ENCODE measurements at regions of chr1 and their contacts with region 1.

Region 1: DNA sequence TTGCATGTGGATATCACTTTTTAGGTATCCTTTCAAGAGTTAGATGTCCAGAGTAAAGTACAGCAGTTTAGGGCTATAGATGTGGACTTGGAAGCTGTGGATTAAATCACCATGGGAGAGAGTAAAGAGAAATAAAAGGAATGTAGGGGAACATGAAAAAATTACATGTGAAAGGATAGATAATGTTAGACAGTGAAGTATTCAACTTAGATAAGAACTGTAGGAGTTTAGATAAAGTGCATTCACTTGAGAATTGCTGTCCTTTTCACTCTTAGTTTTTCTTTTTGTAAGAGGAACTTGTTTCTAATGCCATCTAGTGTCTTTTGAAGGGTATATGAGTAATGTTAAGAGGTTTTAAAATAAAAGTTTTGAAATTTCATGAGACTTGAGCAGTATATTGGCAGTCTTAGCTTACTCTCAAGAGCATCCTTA is 40.1 kb downstream of the MAST2 start:
- DNase-seq: no peak
- H3K4me3 ChIP-seq: no peak overlapping the region
- H3K27ac ChIP-seq: no peak overlapping the region
- H3K4me1 ChIP-seq: peaks cover 0 to 6% of the 10 kb centered on the region in 2 donors
- H3K27me3 ChIP-seq: no peaks in the 10 kb centered on the region
- CTCF ChIP-seq: peak in 5 of 6 experiments; percentile 17 to 47 (median 44)
- POLR2A ChIP-seq: no peak

Region 2: DNA sequence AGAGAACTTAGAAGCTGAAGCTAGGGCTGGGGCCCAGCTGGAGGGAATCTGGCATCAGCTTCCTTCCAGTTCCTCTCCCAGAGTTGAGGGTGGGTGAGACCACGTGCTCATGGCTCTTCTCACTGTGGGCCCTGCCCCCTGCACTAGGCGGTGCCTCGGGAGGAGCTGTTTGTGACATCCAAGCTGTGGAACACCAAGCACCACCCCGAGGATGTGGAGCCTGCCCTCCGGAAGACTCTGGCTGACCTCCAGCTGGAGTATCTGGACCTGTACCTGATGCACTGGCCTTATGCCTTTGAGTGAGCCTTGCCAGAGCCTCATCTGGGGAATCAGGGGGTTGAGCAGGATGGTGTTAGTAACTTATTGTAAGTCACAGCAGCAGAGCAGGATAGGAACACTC is 276.8 kb before region 1 on chr1:
- intact Hi-C with region 1: no loop called
- DNase-seq: peak in 6 of 7 donors; percentile 43 to 84 (median 46)
- H3K4me3 ChIP-seq: no peak overlapping the region
- H3K27ac ChIP-seq: no peak overlapping the region
- H3K4me1 ChIP-seq: peaks cover 0 to 8% of the 10 kb centered on the region in 2 donors
- H3K27me3 ChIP-seq: no peaks in the 10 kb centered on the region
- CTCF ChIP-seq: no peak
- POLR2A ChIP-seq: no peak

Region 3: DNA sequence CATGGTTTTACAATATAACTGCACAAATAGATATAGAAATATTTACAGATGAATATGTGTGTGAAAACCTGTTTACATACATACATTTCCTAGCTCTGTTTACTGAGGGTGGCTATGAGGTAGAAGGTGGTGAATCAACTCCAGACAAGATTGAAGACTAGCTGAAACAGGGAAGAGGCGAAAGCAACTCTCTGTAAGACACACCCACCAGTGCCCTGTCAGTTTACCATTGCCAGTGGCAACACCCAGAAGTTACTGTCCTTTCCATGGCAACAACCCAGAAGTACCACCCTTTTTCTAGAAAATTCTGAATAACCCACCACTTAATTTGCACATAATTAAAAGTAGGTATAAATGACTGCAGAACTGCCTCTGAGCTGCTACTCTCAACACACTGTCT is 138.9 kb before region 1 on chr1:
- intact Hi-C with region 1: loop called in 1 of 2 experiments (anchors 10 kb)
- DNase-seq: no peak
- H3K4me3 ChIP-seq: no peak overlapping the region
- H3K27ac ChIP-seq: no peak overlapping the region
- H3K4me1 ChIP-seq: no peaks in the 10 kb centered on the region
- H3K27me3 ChIP-seq: no peaks in the 10 kb centered on the region
- CTCF ChIP-seq: no peak
- POLR2A ChIP-seq: no peak

Region 4: DNA sequence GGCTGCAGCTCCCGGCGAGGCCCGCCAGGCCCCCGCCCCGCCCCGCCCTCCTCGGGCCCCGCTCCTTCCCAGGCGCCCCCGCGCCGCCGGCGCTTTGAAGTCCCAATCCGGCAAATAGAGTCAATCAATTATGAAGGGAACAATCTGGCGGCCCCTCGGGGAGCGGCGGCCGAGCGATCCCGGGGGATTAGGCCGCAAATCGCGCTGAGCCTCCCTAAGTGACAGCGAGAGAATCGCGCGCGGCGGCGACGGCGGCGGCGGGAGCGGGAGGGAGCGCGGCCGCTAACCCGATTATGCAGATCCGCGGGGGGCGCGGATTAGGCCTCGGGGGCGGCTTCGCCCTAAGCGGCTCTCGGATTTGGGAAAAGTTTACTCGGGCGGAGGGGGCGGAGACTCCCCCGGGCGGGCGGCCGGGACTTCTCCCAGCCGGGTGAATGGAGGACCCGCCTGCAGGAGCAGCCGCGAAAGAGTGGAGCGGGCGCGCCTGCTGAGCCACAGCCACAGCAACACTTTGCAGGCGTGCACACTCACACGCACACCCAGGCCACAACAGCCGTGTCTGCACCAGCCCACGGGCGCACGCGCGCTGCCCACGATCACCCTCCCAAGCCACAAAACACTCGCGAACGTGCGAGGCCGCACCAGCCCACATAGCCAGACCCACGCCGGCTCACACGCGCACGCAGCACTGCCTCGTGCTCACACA is 623.1 kb after region 1 on chr1:
- intact Hi-C with region 1: no loop called
- DNase-seq: peak in 4 of 7 donors; percentile 21 to 33 (median 30)
- H3K4me3 ChIP-seq: peak overlapping the region in 2 of 4 donors; percentile 38 to 80
- H3K27ac ChIP-seq: no peak overlapping the region
- H3K4me1 ChIP-seq: peaks cover 6 to 7% of the 10 kb centered on the region in 2 donors
- H3K27me3 ChIP-seq: peaks cover 5% of the 10 kb centered on the region
- CTCF ChIP-seq: no peak
- POLR2A ChIP-seq: no peak